Vagina (tissue), 2 donors: ENCODE measurements at regions of chr20 and their contacts with region 1.

Region 1: DNA sequence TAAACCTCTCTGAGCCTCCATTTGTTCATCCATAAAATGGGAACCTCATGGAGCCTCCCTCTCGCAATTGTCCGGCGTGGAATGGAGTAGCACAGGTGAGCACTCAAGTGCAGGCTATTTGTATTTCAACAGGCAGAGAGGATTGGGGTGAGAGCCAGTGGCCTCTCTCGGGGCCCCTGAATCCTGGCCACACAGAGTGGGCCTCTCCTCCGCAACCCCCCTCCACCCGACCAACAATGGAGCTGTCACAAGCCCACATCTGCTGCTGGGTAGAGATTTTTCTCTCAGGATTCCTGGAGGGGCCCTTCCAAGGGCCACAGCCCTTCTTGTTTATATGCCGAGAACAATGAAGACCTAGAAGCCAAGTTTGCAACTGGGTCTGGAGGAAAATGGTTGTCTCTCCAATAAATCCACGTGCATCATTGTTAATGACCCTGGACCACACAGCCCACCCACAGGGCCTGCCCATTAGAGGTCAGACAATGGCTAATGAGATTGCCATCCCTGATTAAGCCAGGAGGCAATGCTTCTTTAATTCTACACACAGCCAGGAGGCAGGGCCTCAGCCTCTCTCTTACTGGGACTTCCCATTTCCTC is 233.0 kb downstream of the ANKRD60 start:
- DNase-seq: no peak
- H3K4me3 ChIP-seq: no peak overlapping the region
- H3K27ac ChIP-seq: no peak overlapping the region
- H3K4me1 ChIP-seq: peaks cover 86% of the 10 kb centered on the region
- H3K27me3 ChIP-seq: no peaks in the 10 kb centered on the region
- CTCF ChIP-seq: no peak
- POLR2A ChIP-seq: no peak

Region 2: DNA sequence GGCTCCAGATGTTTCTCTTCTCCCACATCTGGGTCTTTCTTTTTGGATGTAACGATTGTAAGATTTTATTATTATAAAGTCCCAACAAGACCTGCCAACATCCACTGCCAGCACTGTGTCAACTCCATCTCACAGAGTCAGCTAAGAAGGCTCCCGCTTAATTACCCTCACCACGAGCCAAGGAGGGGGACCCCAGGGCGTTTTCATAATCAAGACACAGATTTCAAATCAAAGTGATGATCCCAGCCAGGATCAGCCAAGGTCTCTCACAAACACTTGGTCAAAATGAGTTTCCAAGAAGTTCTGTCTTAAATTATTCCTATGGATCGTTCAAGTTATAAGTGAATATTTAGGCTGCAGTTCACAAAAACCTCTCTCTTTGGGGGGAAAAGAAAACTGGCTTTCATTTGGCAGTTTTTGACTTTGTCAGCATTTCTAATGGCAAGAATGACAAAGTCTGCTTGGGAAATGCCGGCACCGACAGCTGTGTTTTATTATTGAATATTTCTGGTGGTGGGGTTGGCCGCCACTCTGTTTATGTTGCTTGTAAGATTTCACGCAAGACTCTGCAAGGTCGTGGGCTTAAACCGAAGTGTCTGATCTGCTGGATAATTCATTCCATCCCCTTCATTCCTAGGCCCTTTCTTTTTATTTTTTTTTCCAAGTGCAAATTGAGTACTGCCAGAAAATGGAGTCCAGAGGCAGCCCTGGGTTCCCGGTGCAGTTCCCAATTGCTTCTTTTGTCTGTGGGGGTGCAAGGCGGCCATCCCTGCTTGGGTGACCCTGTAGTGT is 115.5 kb before region 1 on chr20:
- intact Hi-C with region 1: no loop called
- DNase-seq: peak; percentile 46 to 88
- H3K4me3 ChIP-seq: no peak overlapping the region
- H3K27ac ChIP-seq: peak overlapping the region; percentile 53
- H3K4me1 ChIP-seq: peaks cover 39% of the 10 kb centered on the region
- H3K27me3 ChIP-seq: no peaks in the 10 kb centered on the region
- CTCF ChIP-seq: no peak
- POLR2A ChIP-seq: no peak

Region 3: GRCh38 chr20:57985278-57985677 is 10.2 kb before region 1 on chr20:
- intact Hi-C with region 1: loop called (anchors 1 kb)
- DNase-seq: no peak
- H3K4me3 ChIP-seq: no peak overlapping the region
- H3K27ac ChIP-seq: no peak overlapping the region
- H3K4me1 ChIP-seq: peaks cover 4% of the 10 kb centered on the region
- H3K27me3 ChIP-seq: no peaks in the 10 kb centered on the region
- CTCF ChIP-seq: no peak
- POLR2A ChIP-seq: no peak

Region 4: GRCh38 chr20:59864726-59865125 is 1869.2 kb after region 1 on chr20:
- intact Hi-C with region 1: no loop called
- DNase-seq: no peak
- H3K4me3 ChIP-seq: no peak overlapping the region
- H3K27ac ChIP-seq: no peak overlapping the region
- H3K4me1 ChIP-seq: no peaks in the 10 kb centered on the region
- H3K27me3 ChIP-seq: no peaks in the 10 kb centered on the region
- CTCF ChIP-seq: no peak
- POLR2A ChIP-seq: no peak